ENCODE measurements at regions of chr20 and their contacts with region 1.

Region 1: GRCh38 chr20:54199721-54200176 is 8.1 kb upstream of the PFDN4 start:
- DNase-seq: peak; percentile 72
- ATAC-seq: peak; percentile 53
- H3K4me3 ChIP-seq: no peak overlapping the region
- H3K4me3 Mint-ChIP-seq: no peak overlapping the region
- H3K27ac ChIP-seq: no peak overlapping the region
- H3K27ac Mint-ChIP-seq: no peak overlapping the region
- H3K4me1 ChIP-seq: peaks cover 0 to 8% of the 10 kb centered on the region in 2 donors
- H3K4me1 Mint-ChIP-seq: peaks cover 10% of the 10 kb centered on the region
- H3K27me3 ChIP-seq: no peaks in the 10 kb centered on the region
- H3K27me3 Mint-ChIP-seq: peaks cover 7% of the 10 kb centered on the region
- CTCF ChIP-seq: peak; percentile 99

Region 2: DNA sequence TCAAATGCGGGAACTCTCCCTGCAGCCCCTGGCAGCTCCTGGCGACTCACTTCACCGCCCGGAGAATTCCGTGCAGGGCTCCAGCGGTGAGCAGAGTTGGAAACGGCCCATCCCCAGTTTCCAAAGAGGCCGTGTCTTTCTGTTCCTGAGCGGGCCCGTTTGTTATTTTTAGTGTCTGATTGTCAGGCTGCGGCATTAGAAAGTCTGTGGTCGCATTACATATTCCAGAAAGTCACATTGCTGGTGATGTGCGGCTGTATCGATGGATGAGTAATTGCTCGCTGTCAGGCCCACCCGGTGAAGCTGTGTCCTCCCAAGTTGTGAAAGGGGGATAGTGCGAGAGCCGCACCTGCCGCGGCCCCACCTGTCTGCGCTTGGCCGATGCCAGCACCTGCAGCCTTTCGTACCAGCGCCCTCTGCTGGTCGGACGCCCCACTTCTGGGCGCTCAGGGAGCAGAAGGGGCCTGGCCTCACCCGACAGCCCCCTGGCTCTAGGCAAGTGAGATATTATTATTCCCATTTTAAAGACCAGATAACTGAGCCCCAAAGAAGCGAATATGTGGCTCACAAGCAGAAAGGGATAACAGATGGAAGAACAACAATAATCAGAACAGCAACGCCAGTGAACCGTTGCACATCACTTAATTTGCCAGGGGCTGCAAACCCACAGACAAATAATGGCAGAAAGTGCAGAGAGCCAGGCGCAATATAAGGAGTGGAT is 982.7 kb before region 1 on chr20:
- CTCF ChIA-PET with region 1: no interaction called
- POLR2A ChIA-PET with region 1: no interaction called
- intact Hi-C with region 1: loop called (anchors 1 kb)
- DNase-seq: peak; percentile 75
- ATAC-seq: peak; percentile 65
- H3K4me3 ChIP-seq: peak overlapping the region in 2 of 5 experiments; percentile 8 to 25
- H3K4me3 Mint-ChIP-seq: peak overlapping the region; percentile 43
- H3K27ac ChIP-seq: no peak overlapping the region
- H3K27ac Mint-ChIP-seq: no peak overlapping the region
- H3K4me1 ChIP-seq: peaks cover 4 to 13% of the 10 kb centered on the region in 2 donors
- H3K4me1 Mint-ChIP-seq: peaks cover 14% of the 10 kb centered on the region
- H3K27me3 ChIP-seq: peaks cover 0 to 9% (median 2%) of the 10 kb centered on the region in 4 experiments
- H3K27me3 Mint-ChIP-seq: peaks cover 14% of the 10 kb centered on the region
- CTCF ChIP-seq: peak; percentile 93

Region 3: DNA sequence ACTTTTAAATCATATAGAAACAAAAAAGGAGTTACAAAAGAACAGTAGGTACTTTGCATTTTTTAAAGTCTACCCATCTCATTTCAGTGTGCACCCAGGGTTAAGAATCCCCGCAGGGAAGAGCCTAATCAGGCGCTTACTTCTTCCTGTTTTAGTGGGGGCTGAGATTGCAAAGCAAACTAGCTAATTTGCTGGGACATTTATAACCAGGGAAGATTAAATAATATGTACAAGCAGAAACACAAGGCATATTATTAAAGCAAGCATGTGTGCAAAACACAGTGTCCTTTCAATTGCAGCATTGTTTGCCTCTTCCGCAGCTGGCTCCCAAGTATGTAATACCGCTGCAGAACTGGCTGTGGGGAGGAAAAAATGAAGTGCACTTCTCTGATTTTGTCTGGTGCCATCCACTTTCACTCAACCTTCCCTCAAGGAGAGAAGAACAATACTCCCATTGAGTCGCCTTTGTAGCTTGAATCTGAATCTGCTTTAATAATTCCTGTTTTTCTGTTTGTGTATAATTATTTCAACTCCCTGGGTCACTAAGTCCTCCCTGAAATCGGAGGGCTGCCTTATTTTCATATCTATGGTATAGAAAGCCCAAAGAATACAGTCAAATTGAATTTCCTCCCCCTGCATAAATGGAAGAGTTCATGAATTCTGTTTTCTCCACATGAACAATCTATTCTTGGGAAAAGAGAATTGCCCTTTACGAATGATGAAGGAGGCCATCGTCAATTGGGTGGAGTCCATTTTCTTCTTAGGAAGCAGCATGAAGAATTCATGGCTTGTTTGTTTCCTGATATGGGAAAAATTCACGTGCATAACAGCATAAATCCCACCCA is 106.1 kb before region 1 on chr20:
- CTCF ChIA-PET with region 1: interaction called, 19 read pairs
- POLR2A ChIA-PET with region 1: no interaction called
- intact Hi-C with region 1: loop called (anchors 1 kb)
- DNase-seq: no peak
- ATAC-seq: no peak
- H3K4me3 ChIP-seq: no peak overlapping the region
- H3K4me3 Mint-ChIP-seq: no peak overlapping the region
- H3K27ac ChIP-seq: no peak overlapping the region
- H3K27ac Mint-ChIP-seq: no peak overlapping the region
- H3K4me1 ChIP-seq: peaks cover 5 to 7% of the 10 kb centered on the region in 2 donors
- H3K4me1 Mint-ChIP-seq: peaks cover 13% of the 10 kb centered on the region
- H3K27me3 ChIP-seq: peaks cover 0 to 3% (median 0%) of the 10 kb centered on the region in 4 experiments
- H3K27me3 Mint-ChIP-seq: peaks cover 11% of the 10 kb centered on the region
- CTCF ChIP-seq: no peak

Region 4: GRCh38 chr20:54188132-54188849 is 11.5 kb before region 1 on chr20:
- CTCF ChIA-PET with region 1: interaction called, 10 read pairs
- POLR2A ChIA-PET with region 1: no interaction called
- intact Hi-C with region 1: no loop called
- DNase-seq: no peak
- ATAC-seq: no peak
- H3K4me3 ChIP-seq: no peak overlapping the region
- H3K4me3 Mint-ChIP-seq: no peak overlapping the region
- H3K27ac ChIP-seq: no peak overlapping the region
- H3K27ac Mint-ChIP-seq: no peak overlapping the region
- H3K4me1 ChIP-seq: no peaks in the 10 kb centered on the region
- H3K4me1 Mint-ChIP-seq: no peaks in the 10 kb centered on the region
- H3K27me3 ChIP-seq: peaks cover 0 to 4% (median 3%) of the 10 kb centered on the region in 4 experiments
- H3K27me3 Mint-ChIP-seq: peaks cover 32% of the 10 kb centered on the region
- CTCF ChIP-seq: no peak

Region 5: GRCh38 chr20:54257071-54257840 is 57.5 kb after region 1 on chr20:
- CTCF ChIA-PET with region 1: no interaction called
- POLR2A ChIA-PET with region 1: no interaction called
- intact Hi-C with region 1: no loop called
- DNase-seq: no peak
- ATAC-seq: no peak
- H3K4me3 ChIP-seq: no peak overlapping the region
- H3K4me3 Mint-ChIP-seq: no peak overlapping the region
- H3K27ac ChIP-seq: no peak overlapping the region
- H3K27ac Mint-ChIP-seq: no peak overlapping the region
- H3K4me1 ChIP-seq: no peaks in the 10 kb centered on the region
- H3K4me1 Mint-ChIP-seq: no peaks in the 10 kb centered on the region
- H3K27me3 ChIP-seq: no peaks in the 10 kb centered on the region
- H3K27me3 Mint-ChIP-seq: peaks cover 12% of the 10 kb centered on the region
- CTCF ChIP-seq: no peak

Region 6: DNA sequence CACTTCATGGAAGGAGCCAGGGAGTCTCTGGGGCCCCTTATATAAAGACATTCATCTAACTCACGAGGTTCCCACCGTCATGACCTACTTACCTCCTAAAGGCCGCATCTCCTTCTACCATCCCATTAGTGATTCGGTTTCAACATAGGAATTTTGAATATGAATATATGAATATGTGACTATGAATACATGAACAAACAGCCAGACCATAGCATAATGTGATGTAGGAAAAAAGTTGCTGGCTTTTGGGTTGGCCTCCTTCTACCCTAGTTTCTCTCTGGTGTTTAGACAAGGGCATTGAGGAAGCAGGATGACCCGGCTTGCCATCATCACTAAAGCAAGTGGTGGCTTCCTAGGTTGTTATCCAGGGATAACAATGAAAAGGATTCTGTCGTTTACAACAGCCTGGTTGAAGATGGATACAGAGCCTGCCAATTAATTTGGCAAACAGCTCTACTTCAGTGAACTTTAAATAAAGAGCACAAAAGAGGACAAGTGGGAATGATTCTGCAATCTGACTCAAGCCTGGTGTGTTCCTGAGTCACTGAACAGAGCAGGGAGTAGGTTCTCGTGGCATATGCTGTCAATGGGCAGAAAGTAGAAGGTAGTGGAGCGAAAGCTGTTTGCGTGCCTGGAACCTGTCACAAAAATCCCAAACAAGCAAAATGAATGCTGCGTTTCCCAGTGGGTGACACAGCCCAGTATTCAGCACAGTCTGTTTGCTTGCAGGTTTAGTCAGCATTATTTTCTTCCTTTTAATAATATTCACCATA is 231.6 kb after region 1 on chr20:
- CTCF ChIA-PET with region 1: no interaction called
- POLR2A ChIA-PET with region 1: no interaction called
- intact Hi-C with region 1: no loop called
- DNase-seq: no peak
- ATAC-seq: no peak
- H3K4me3 ChIP-seq: no peak overlapping the region
- H3K4me3 Mint-ChIP-seq: no peak overlapping the region
- H3K27ac ChIP-seq: no peak overlapping the region
- H3K27ac Mint-ChIP-seq: no peak overlapping the region
- H3K4me1 ChIP-seq: no peaks in the 10 kb centered on the region
- H3K4me1 Mint-ChIP-seq: no peaks in the 10 kb centered on the region
- H3K27me3 ChIP-seq: no peaks in the 10 kb centered on the region
- H3K27me3 Mint-ChIP-seq: no peaks in the 10 kb centered on the region
- CTCF ChIP-seq: no peak